T-cell (primary cell): ENCODE measurements at regions of chr11 and their contacts with region 1.

Region 1: DNA sequence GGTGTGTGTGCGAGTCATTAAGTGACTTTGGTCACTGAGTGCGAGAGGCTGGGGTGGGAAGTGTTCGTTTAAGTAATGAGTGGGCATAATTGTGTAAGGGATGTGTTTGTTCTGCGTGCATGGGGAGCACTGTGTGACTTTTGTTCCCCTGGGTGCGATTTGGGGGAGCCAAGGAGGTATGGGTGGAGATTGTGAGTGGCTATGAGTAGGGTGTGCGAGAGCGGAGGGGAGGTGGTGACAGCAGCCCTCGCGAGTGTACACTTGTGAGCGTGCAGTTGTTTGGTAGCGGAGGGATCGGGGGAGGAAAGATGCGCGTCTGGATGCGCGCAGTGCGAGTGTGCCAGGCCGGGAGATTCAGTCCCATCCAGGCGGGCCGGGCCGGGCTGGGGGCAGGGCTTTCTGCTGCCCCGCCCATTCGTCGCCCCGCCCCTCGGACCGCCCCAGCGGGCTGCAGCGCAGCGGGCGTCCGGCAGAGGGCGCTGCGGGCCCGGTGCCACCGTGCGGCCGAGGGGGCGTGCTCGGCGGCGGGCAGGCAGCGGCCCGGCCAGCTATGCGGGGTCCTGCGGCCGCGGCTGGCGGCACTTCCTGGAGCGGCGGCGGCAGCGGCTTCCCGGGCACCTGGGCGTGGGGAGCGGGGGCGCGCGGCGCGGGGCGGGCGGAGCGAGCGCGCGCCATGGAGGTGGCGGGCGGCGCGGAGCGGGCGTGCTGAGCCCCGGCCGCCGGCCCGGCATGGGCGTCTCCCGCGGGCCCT is at the start of gene DGKZ:
- DNase-seq: peak; percentile 76 to 96 (median 86)
- ATAC-seq: peak; percentile 68 to 84 (median 74)
- H3K4me3 ChIP-seq: peak within 1 kb of the TSS; percentile 89 to 94
- H3K4me3 Mint-ChIP-seq: peak within 1 kb of the TSS; percentile 85 to 94 (median 91)
- H3K27ac ChIP-seq: peak within 1 kb of the TSS; percentile 63
- H3K27ac Mint-ChIP-seq: peak within 1 kb of the TSS; percentile 97 to 98
- H3K4me1 ChIP-seq: peaks cover 64 to 87% of the 10 kb centered on the region in 2 experiments
- H3K4me1 Mint-ChIP-seq: peaks cover 81 to 87% (median 87%) of the 10 kb centered on the region in 3 donors
- H3K27me3 ChIP-seq: peaks cover 0 to 3% of the 10 kb centered on the region in 2 experiments
- H3K27me3 Mint-ChIP-seq: no peaks in the 10 kb centered on the region
- total RNA-seq, gene DGKZ: 235 to 318 (median 251) TPM

Region 2: DNA sequence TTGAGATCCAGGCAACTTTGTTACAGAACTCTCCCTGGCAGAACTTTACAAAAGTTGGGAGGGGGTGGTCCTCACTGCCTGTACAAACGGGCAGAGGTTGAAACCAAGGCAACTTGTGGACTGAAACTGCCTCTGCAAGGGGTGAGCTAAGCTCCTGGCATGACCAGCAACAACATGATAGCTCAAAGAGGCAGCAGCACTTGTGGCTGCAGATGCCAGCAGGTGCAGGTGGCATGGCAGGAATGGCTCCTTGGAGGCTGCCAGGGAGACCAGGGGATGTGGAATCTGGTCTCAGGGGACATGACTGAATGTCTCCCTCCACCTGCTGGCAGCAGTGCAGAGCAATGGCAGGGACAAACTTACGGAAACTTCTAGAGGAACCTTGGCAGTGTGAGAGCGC is 187.0 kb before region 1 on chr11:
- CTCF ChIA-PET with region 1: no interaction called
- POLR2A ChIA-PET with region 1: no interaction called
- DNase-seq: no peak
- ATAC-seq: no peak
- H3K4me3 ChIP-seq: no peak overlapping the region
- H3K4me3 Mint-ChIP-seq: no peak overlapping the region
- H3K27ac ChIP-seq: no peak overlapping the region
- H3K27ac Mint-ChIP-seq: no peak overlapping the region
- H3K4me1 ChIP-seq: no peaks in the 10 kb centered on the region
- H3K4me1 Mint-ChIP-seq: peaks cover 0 to 7% (median 0%) of the 10 kb centered on the region in 3 donors
- H3K27me3 ChIP-seq: peaks cover 0 to 24% of the 10 kb centered on the region in 2 experiments
- H3K27me3 Mint-ChIP-seq: peaks cover 35 to 44% of the 10 kb centered on the region in 2 donors

Region 3: DNA sequence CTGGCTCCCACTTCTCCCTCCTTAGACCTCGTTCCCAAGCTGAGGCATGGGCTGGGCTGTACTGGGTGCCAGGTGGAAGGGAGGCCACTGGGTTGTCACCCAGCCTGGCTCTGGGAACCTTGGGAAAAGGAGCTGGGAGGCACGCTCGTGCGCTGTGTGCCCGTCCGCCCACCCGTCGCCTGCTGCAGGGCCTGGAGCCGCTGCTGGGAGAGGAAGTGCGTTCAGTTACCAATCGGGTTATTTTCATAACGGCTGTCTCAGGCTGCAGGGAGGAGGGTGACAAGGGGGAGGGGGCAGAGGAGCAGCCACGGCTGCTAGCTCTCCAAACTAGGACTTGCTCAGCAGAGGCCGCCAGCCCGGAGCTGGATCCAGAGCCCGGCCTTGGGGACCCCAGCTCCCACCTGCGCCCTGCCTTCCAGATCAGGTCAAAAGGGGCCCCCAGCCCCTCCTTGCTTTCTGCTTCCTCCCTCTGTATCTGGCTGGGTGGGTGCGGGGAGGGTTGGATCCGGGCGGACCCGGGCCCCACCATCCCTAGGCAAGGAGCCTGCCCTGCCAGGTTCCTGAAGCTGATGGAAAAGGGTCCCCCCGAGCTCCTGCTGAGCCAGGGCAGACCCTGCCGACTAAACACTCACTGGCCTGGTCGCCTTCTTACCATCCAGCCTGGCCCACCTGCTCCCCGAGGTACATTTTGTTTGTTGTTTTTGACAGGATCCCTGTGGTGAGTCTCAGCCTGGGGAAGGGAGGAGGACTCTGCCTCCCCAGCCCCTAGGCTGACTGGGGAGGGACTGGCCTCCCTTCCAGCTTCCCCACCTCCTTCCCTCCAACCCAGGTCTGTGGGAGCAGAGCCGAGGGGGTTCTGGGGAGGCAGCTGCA is 14.5 kb after region 1 on chr11:
- CTCF ChIA-PET with region 1: interaction called, 12 to 18 read pairs
- POLR2A ChIA-PET with region 1: interaction called, 4 to 5 read pairs
- DNase-seq: peak in 33 of 35 experiments; percentile 56 to 80 (median 66)
- ATAC-seq: peak; percentile 90 to 98 (median 95)
- H3K4me3 ChIP-seq: peak overlapping the region; percentile 45 to 55
- H3K4me3 Mint-ChIP-seq: peak overlapping the region; percentile 81 to 90 (median 82)
- H3K27ac ChIP-seq: peak overlapping the region; percentile 71
- H3K27ac Mint-ChIP-seq: peak overlapping the region; percentile 91 to 94
- H3K4me1 ChIP-seq: peaks cover 19 to 79% of the 10 kb centered on the region in 2 experiments
- H3K4me1 Mint-ChIP-seq: peaks cover 64 to 82% (median 74%) of the 10 kb centered on the region in 3 donors
- H3K27me3 ChIP-seq: no peaks in the 10 kb centered on the region
- H3K27me3 Mint-ChIP-seq: no peaks in the 10 kb centered on the region

Region 4: GRCh38 chr11:46367244-46367915 is 20.3 kb after region 1 on chr11:
- CTCF ChIA-PET with region 1: interaction called, 12 to 18 read pairs
- POLR2A ChIA-PET with region 1: no interaction called
- DNase-seq: peak; percentile 42 to 88 (median 72)
- ATAC-seq: peak; percentile 86 to 92 (median 90)
- H3K4me3 ChIP-seq: no peak overlapping the region
- H3K4me3 Mint-ChIP-seq: no peak overlapping the region
- H3K27ac ChIP-seq: peak overlapping the region; percentile 23
- H3K27ac Mint-ChIP-seq: peak overlapping the region in 1 of 2 donors; percentile 69
- H3K4me1 ChIP-seq: peaks cover 8 to 63% of the 10 kb centered on the region in 2 experiments
- H3K4me1 Mint-ChIP-seq: peaks cover 46 to 55% (median 55%) of the 10 kb centered on the region in 3 donors
- H3K27me3 ChIP-seq: no peaks in the 10 kb centered on the region
- H3K27me3 Mint-ChIP-seq: no peaks in the 10 kb centered on the region